Motor neuron (in vitro differentiated cells): ENCODE measurements at regions of chr6 and their contacts with region 1.

Region 1: DNA sequence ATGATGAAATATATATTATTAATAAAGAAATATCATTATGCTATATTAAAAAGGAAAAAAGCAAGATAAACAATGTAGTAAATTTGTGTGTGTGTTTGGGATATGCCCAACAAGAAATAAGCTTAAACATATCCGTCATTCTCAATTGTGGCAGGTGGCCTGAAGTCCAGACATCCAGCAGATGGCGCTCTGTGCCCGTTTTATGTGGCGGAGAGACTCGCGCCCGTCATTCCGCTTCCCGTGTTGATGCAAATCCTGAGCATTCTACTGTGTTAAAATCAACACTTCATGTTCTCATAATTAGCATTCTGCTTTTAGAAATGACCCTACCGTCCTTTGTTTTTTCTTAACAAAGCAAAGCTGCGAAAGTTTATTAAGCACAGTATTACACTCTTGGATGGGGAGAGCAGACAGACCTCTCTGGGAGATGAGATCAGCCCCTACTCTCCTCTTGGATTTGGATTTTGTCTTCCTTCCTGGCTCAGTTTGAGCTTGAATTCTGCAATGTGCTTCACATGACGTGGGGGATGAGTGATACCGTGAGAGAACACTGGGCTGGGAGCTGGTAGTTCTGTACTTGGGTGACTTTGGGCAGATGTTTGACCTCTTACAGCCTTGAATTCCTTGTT is 125.8 kb downstream of the MCHR2 start:
- ATAC-seq: peak; percentile 63 to 95 (median 82)
- H3K4me3 ChIP-seq: peak overlapping the region in 1 of 5 donors; percentile 9
- H3K27ac ChIP-seq: no peak overlapping the region
- H3K4me1 ChIP-seq: no peaks in the 10 kb centered on the region

Region 2: GRCh38 chr6:98894810-98895209 is 973.4 kb before region 1 on chr6:
- in situ Hi-C with region 1: no loop called
- ATAC-seq: peak in 5 of 8 experiments; percentile 29 to 98 (median 50)
- H3K4me3 ChIP-seq: no peak overlapping the region
- H3K27ac ChIP-seq: no peak overlapping the region
- H3K4me1 ChIP-seq: no peaks in the 10 kb centered on the region

Region 3: DNA sequence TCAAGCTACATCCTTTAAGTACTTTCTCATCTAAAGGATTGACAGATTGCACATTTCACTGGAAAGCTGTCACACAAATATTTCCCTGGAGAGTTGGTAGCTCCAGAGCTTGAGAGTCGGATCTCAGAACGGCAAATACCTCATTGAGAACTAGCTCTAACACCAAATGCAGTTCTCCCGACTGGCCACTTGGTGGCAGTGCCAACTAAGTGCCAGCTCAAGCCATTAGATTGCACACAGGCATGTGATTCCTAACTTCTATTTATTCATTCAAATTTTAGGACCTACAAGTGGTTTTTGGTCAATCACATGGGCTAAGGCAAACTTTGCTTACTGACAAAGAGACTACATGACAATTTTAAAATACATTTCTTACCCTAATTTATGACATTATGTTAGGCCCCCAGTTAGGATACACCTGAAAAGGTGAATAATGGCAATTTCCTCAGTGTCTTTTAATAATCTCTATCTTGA is 133.8 kb after region 1 on chr6:
- in situ Hi-C with region 1: no loop called
- ATAC-seq: peak in 7 of 8 experiments; percentile 35 to 93 (median 78)
- H3K4me3 ChIP-seq: no peak overlapping the region
- H3K27ac ChIP-seq: no peak overlapping the region
- H3K4me1 ChIP-seq: no peaks in the 10 kb centered on the region

Region 4: GRCh38 chr6:100099189-100100074 is 231.2 kb after region 1 on chr6:
- in situ Hi-C with region 1: loop called in 6 of 9 experiments (anchors 25 kb)
- ATAC-seq: peak in 4 of 8 experiments; percentile 30 to 65 (median 51)
- H3K4me3 ChIP-seq: no peak overlapping the region
- H3K27ac ChIP-seq: no peak overlapping the region
- H3K4me1 ChIP-seq: no peaks in the 10 kb centered on the region

Region 5: DNA sequence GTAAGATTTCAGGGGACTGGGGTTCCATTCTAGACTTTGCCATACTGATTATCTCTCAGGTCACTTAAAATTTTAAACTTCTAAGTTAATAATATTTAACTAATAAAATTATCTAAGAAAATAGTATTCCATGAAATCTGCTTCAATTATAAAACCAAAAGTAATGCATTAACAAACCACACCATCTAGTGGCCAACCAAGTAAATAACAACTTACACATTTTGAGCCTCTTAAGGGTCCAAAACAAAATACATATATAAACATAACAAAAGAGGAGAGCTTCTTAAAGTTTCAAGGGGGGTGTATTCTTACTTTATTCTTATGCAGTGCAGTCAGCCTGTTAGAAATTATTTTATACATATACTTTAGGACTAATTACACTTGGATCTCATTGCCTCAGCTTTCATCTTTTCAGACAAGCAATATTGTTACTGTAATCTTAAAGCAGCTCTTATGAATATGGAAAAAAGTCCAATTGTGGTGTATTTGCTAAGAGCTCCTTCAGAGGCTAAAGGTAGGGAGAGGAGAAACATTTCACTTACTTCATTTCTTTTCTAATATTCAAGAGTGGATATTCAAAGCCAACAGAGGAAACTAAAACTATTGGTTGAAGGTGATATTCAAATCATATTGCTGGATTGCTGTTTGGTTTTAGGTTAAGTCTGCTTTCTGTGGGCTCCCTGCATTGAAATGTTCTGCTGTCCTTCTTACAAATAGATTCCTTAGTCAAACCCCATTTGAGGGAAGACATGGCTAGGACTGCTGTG is 796.3 kb after region 1 on chr6:
- in situ Hi-C with region 1: loop called in 1 of 9 experiments (anchors 25 kb)
- ATAC-seq: peak in 1 of 8 experiments; percentile 22
- H3K4me3 ChIP-seq: no peak overlapping the region
- H3K27ac ChIP-seq: no peak overlapping the region
- H3K4me1 ChIP-seq: no peaks in the 10 kb centered on the region